ENCODE measurements at regions of chr5 and their contacts with region 1.

Region 1: GRCh38 chr5:16492391-16493175 is 27.0 kb upstream of the ZNF622 start:
- DNase-seq: peak; percentile 84
- H3K4me3 ChIP-seq: no peak overlapping the region
- H3K27ac ChIP-seq: peak overlapping the region; percentile 19
- H3K4me1 ChIP-seq: no peaks in the 10 kb centered on the region
- H3K27me3 ChIP-seq: no peaks in the 10 kb centered on the region
- CTCF ChIP-seq: no peak

Region 2: DNA sequence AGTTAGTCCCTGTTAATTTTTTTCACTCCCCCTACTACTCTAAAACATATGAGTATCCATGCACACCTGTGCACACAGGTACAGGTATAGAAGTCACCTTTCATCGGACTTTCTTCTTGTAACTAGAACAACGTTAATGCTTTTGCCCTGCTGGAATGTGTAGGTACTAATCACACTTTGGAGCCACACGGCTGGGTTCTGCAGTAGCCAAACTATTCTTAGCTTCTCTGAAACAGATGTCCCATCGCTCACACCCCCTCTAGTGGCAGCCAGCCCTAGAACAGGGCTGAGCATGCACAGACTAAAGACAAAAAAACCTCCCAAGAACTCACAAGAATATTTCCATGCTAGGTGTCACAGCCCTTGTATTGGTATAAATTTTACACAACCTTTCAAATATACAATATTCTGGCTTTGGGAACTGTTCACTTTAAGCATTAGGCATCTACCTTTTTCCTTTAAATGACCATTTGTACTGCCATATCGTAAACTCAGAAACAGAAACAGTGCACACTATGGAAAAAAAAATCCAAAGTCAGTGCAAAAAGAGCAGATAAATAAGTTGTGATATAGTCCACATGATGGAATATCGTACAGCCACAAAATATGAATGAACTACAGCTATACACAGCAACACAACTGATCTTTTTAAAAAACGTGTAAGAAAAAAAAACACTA is 60.2 kb after region 1 on chr5:
- intact Hi-C with region 1: loop called (anchors 5 kb)
- DNase-seq: peak; percentile 91
- H3K4me3 ChIP-seq: no peak overlapping the region
- H3K27ac ChIP-seq: no peak overlapping the region
- H3K4me1 ChIP-seq: no peaks in the 10 kb centered on the region
- H3K27me3 ChIP-seq: no peaks in the 10 kb centered on the region
- CTCF ChIP-seq: peak; percentile 82

Region 3: DNA sequence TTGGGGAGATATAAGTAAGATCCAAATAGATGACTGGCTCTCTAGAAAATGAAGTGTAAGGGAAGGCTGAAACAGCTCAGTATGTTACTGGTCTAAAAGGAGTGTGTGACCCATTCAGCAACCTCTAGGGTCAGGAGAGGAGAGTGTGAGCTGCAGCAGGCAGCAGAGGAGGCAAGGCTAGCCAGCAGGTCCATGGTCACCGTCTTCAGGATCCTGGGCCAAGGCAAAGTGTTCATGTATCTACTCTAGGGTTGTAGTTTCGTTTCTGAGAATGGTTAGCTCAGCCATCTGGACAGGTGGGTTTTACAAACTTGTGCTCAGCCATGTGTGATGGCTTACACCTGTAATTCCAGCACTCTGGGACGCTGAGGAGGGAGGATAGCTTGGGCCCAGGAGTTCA is 429.8 kb after region 1 on chr5:
- intact Hi-C with region 1: no loop called
- DNase-seq: no peak
- H3K4me3 ChIP-seq: no peak overlapping the region
- H3K27ac ChIP-seq: no peak overlapping the region
- H3K4me1 ChIP-seq: no peaks in the 10 kb centered on the region
- H3K27me3 ChIP-seq: no peaks in the 10 kb centered on the region
- CTCF ChIP-seq: no peak

Measured in colonic mucosa (tissue), 4 donors.